ENCODE measurements at regions of chr17 and their contacts with region 1.

Region 1: GRCh38 chr17:700504-701094 is 14.0 kb downstream of the VPS53 start:
- DNase-seq: no peak
- ATAC-seq: peak; percentile 62
- H3K4me3 Mint-ChIP-seq: no peak overlapping the region
- H3K27ac Mint-ChIP-seq: no peak overlapping the region
- H3K4me1 Mint-ChIP-seq: peaks cover 4% of the 10 kb centered on the region
- H3K27me3 Mint-ChIP-seq: no peaks in the 10 kb centered on the region
- CTCF ChIP-seq: peak; percentile 66

Region 2: DNA sequence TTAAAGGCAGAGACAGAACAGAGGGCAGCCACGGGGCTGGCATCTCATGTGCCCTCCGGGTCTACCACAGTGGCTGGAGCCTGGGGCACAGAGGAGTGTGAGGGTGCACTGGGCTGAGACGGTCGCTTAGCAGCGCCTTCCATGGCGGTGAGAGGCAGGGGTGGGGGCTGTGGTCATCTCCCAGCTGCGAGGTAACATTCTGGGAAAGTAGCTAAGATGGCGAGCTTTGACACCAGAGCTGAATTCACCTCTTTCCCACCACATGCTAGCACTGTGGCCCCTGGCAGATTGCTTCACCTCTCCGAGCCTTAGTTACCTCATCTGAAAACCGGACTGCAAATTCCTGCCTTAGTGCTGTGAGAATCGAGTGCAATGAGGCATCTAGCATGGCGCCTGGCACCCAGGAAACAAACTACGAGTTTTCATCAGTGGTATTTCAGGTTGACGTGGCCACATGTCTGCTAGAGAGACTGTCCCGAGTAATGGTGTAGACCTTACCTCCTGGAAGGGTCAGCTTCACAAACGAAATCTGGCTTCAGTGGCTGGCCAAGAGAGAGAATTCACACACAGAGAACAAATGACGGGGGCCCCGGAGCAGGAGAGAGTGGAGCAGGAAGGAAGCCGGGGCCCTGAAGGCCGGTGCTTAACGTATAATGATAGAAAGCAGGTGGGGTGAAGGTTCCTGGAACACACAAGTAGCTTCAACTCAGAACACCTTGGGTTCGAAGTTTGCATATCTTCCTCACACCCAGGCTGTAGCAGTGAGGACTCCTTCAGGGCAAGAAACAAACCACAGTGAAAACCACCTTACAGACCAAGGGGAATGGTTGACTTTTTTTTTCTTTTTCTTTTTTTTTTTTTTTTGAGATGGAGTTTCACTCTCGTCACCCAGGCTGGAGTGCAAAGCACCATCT is 284.0 kb before region 1 on chr17:
- CTCF ChIA-PET with region 1: interaction called, 162 read pairs
- POLR2A ChIA-PET with region 1: interaction called, 3 read pairs
- intact Hi-C with region 1: loop called (anchors 5 kb)
- DNase-seq: peak; percentile 68
- ATAC-seq: peak; percentile 70
- H3K4me3 Mint-ChIP-seq: peak overlapping the region; percentile 70
- H3K27ac Mint-ChIP-seq: peak overlapping the region; percentile 98
- H3K4me1 Mint-ChIP-seq: peaks cover 72% of the 10 kb centered on the region
- H3K27me3 Mint-ChIP-seq: no peaks in the 10 kb centered on the region
- CTCF ChIP-seq: no peak

Region 3: DNA sequence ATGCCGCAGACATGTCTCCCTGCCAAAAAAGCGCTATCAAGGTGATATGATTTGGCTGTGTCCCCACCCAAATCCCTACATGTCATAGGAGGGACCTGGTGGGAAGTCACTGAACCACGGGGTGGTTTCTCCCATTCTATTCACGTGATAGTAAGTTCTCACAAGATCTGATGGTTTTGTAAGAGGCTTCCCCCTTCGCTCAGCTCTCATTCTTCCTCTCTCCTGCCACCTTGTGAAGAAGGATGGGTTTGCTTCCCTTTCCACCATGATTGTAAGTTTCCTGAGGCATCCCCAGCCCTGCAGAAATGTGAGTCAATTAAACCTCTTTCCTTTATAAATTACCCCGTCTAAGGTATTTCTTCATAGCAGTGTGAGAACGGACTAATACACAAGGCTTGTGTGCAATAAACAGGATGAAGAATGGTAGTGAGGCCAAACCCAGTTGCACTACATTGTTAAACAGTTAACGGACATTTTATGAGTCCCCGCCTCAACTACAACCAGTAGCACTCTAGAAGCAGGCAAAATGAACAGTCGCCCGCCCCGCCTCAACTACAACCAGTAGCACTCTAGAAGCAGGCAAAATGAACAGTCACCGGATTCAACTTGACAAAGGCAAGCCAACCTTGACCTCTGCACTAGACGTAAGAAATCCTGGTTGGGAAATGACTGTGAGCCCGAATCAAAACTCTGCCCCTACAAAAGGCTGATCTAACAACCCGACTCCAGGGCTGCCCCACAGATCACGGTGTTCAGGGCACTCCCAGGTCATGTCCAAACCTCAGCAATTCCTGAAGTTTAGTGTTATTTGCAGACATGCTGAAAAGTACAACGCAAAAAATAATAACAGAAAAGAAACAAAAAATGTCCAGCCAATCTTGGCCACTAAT is 12.3 kb before region 1 on chr17:
- CTCF ChIA-PET with region 1: interaction called, 12 read pairs
- POLR2A ChIA-PET with region 1: interaction called, 3 read pairs
- intact Hi-C with region 1: no loop called
- DNase-seq: no peak
- ATAC-seq: no peak
- H3K4me3 Mint-ChIP-seq: no peak overlapping the region
- H3K27ac Mint-ChIP-seq: no peak overlapping the region
- H3K4me1 Mint-ChIP-seq: no peaks in the 10 kb centered on the region
- H3K27me3 Mint-ChIP-seq: no peaks in the 10 kb centered on the region
- CTCF ChIP-seq: no peak

Region 4: GRCh38 chr17:789160-789840 is 88.7 kb after region 1 on chr17:
- CTCF ChIA-PET with region 1: no interaction called
- POLR2A ChIA-PET with region 1: no interaction called
- intact Hi-C with region 1: no loop called
- DNase-seq: no peak
- ATAC-seq: no peak
- H3K4me3 Mint-ChIP-seq: no peak overlapping the region
- H3K27ac Mint-ChIP-seq: no peak overlapping the region
- H3K4me1 Mint-ChIP-seq: peaks cover 13% of the 10 kb centered on the region
- H3K27me3 Mint-ChIP-seq: no peaks in the 10 kb centered on the region
- CTCF ChIP-seq: no peak